ENCODE measurements at regions of chr3 and their contacts with region 1.

Region 1: DNA sequence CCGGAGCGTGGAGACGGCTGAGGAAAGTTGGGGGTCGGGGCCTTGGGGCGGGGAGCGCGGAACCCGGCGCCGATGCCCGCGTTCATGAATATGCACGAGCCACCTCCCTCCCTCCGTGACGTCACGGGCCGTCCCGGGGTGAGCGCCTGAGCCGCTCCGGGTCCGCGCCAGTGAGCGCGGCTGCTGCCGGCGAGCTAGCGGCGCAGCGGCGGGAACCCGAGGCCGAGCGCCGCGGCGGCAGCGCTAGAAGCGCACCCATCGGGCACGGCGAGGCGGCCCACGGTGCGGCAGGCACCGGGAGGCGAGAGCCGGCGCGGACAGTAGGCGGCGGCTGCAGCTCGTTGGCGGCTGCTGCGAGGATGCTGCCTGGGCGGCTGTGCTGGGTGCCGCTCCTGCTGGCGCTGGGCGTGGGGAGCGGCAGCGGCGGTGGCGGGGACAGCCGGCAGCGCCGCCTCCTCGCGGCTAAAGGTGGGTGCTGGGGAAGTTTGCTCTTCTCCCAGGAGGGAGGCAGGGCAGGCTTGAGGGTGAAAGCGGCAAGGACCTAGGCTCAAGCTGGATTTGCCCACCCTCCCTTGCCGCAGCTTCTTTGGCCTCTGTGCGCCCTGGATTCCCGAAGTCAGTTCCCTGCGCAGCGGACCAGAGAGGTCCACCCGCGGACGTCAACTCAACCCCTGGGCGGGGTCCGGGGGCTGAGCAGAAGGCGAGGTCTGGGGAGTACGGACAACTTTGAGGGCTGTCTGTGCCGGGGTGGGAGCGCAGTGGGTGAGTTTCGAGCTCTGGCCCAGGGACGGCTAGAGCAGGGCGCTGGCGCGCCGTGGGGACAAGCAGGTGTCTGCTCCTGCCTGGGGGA is at the start of gene CLSTN2:
- DNase-seq: peak; percentile 64 to 78
- ATAC-seq: peak; percentile 82 to 91 (median 88)
- H3K4me3 ChIP-seq: peak within 1 kb of the TSS; percentile 44 to 62 (median 58)
- H3K27ac ChIP-seq: peak within 1 kb of the TSS in 2 of 10 donors; percentile 15 to 57
- H3K4me1 ChIP-seq: peaks cover 0 to 24% (median 14%) of the 10 kb centered on the region in 9 donors
- H3K27me3 ChIP-seq: peaks cover 0 to 66% (median 16%) of the 10 kb centered on the region in 7 donors
- CTCF ChIP-seq: peak in 2 of 9 donors; percentile 3 to 18
- total RNA-seq, gene CLSTN2: 1.5 to 10.7 (median 5.5) TPM

Region 2: GRCh38 chr3:139434764-139435307 is 500.4 kb before region 1 on chr3:
- intact Hi-C with region 1: loop called in 1 of 10 experiments (anchors 10 kb)
- DNase-seq: peak in 1 of 2 donors; percentile 16
- ATAC-seq: peak in 3 of 8 donors; percentile 31 to 67 (median 62)
- H3K4me3 ChIP-seq: no peak overlapping the region
- H3K27ac ChIP-seq: peak overlapping the region in 1 of 10 donors; percentile 80
- H3K4me1 ChIP-seq: peaks cover 0 to 12% (median 0%) of the 10 kb centered on the region in 9 donors
- H3K27me3 ChIP-seq: no peaks in the 10 kb centered on the region
- CTCF ChIP-seq: no peak

Region 3: GRCh38 chr3:139588450-139588849 is 346.8 kb before region 1 on chr3:
- intact Hi-C with region 1: loop called in 5 of 10 experiments (anchors 2 to 10 kb)
- DNase-seq: peak; percentile 20 to 21
- ATAC-seq: peak in 5 of 8 donors; percentile 57 to 80 (median 73)
- H3K4me3 ChIP-seq: no peak overlapping the region
- H3K27ac ChIP-seq: no peak overlapping the region
- H3K4me1 ChIP-seq: peaks cover 0 to 7% (median 0%) of the 10 kb centered on the region in 9 donors
- H3K27me3 ChIP-seq: no peaks in the 10 kb centered on the region
- CTCF ChIP-seq: peak in 7 of 9 donors; percentile 9 to 47 (median 32)

Region 4: DNA sequence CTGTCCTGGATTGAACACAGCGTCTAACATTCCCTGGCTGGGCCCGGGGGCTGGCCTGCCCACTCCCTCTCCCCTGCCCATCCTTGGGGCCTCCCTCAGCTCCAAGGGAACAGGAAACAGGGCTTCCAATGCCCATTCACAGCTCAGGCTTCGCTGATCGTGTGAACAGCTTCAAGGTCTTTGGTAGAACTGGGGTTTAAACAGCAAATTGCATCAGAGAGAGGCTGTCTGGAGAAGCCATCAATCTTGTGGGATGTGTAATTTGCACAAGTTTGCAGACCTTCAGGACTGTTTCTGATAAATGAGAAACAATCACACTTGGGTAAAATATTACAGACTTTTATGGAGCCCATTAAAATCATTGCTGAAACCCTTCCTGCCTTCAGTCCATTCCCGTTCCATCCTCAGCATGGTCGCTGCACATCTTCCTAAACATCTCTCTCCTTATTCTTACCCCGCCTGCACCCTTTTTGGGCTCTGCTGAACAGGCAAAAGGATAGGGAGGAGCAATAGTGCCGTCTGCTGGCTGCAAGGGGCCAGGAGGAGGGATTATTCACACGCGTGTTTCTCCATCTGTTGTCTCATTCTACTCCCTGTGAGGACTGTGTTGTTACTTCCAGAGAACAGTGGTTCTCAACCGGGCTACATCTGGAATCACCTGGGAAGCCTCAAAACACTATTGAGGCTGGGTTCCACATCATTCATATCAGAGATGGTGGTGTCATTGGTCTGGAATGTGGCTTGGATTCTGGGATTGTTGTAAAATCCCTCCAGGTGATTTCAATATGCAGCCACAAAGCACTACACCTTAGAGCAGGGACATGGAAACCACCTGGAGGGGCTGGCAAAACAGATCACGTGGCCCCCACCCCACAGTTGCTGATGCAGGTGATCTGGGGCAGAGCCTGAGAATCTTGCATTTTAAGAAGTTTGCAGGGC is 116.0 kb after region 1 on chr3:
- intact Hi-C with region 1: loop called in 6 of 10 experiments (anchors 2 to 5 kb)
- DNase-seq: peak in 1 of 2 donors; percentile 13
- ATAC-seq: peak in 3 of 8 donors; percentile 53 to 65 (median 61)
- H3K4me3 ChIP-seq: no peak overlapping the region
- H3K27ac ChIP-seq: no peak overlapping the region
- H3K4me1 ChIP-seq: no peaks in the 10 kb centered on the region
- H3K27me3 ChIP-seq: no peaks in the 10 kb centered on the region
- CTCF ChIP-seq: peak; percentile 13 to 64 (median 49)

Region 5: DNA sequence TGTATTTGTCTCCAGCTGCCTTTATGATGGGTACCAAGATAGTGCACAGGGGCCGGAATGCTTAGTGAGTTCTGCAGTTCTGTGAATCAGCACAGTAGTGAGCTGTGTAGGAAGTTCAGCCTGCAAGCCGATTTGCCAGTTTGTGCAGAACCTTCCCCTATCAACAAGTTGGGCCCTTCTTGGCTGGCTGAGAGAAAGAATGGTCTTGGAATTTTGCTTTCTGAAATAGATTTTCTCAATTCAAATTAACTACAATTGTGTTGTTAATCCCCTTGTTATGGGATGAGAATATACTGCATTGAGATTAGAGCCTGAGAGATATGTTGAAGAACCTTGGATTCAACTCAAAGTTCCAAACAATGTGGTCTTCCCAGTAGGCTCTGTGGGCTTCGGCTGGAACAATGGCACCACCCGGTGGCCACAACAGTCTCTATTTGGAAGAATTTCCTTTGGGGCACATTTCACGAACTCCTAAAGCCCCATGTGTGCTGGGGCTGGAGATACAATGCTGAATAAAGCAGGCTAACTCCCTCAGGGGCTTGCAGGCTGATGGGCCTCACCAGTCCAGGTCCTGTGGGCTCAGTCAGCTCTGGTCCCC is 801.7 kb after region 1 on chr3:
- intact Hi-C with region 1: loop called in 3 of 10 experiments (anchors 5 to 10 kb)
- DNase-seq: peak; percentile 40 to 67
- ATAC-seq: peak in 7 of 8 donors; percentile 58 to 74 (median 64)
- H3K4me3 ChIP-seq: no peak overlapping the region
- H3K27ac ChIP-seq: no peak overlapping the region
- H3K4me1 ChIP-seq: no peaks in the 10 kb centered on the region
- H3K27me3 ChIP-seq: peaks cover 0 to 14% (median 0%) of the 10 kb centered on the region in 7 donors
- CTCF ChIP-seq: peak; percentile 43 to 66 (median 58)

Measured in heart right ventricle (tissue), 16 donors.